CD4-positive, alpha-beta memory T cell (primary cell): ENCODE measurements at regions of chr1 and their contacts with region 1.

Region 1: GRCh38 chr1:32072622-32073298 is at the start of gene TMEM39B:
- DNase-seq: peak; percentile 94 to 97 (median 96)
- H3K4me3 ChIP-seq: peak within 1 kb of the TSS; percentile 95
- H3K4me3 Mint-ChIP-seq: peak within 1 kb of the TSS; percentile 84 to 98 (median 92)
- H3K27ac ChIP-seq: peak within 1 kb of the TSS; percentile 73
- H3K27ac Mint-ChIP-seq: peak within 1 kb of the TSS; percentile 80 to 99 (median 97)
- H3K4me1 ChIP-seq: peaks cover 35% of the 10 kb centered on the region
- H3K4me1 Mint-ChIP-seq: peaks cover 26 to 52% (median 41%) of the 10 kb centered on the region in 4 donors
- H3K27me3 ChIP-seq: no peaks in the 10 kb centered on the region
- H3K27me3 Mint-ChIP-seq: no peaks in the 10 kb centered on the region
- total RNA-seq, gene TMEM39B: 18.4 to 19.1 TPM

Region 2: DNA sequence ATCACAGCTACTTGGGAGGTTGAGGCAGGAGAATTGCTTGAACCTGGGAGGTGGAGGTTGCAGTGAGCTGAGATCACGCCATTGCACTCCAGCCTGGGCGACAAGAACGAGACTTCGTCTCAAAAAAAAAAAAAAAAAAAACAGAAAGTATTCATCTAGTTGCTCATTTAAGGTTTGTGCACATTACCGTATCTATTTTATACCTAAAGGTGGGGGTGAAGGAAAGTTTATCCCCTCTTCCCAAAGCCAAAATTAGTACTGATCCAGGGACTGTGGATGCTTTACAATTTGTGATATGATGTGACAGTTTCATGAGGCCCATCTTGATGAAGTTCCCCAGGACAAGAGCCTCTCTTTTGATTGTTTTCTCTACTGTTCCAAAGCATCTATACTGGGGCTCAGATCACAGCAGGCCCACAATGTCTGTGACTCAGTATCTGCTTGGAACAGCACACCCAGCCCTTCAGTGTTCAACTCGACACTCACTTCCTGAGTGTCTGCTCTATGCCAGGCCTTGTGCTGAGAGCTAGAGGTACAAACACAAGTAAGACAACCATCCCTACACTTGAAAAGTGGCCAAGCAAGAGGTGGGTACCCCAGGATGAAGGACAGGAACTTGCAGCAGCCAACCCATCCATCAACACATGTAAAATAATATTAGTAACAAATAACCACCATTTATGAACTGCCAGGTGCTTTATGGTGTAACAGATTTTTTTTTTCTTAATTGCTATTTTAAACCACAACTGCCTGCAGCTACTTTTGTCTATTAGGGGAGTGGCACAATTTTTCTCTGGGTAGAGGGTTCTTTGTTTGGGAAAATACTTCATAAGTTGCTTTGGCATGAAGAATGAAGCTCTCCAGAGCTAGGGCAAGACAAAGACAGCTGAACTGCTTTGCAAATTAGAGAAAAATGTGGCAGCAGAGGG is 88.1 kb before region 1 on chr1:
- CTCF ChIA-PET with region 1: interaction called, 6 read pairs
- POLR2A ChIA-PET with region 1: interaction called, 10 read pairs
- intact Hi-C with region 1: no loop called
- DNase-seq: peak in 2 of 5 donors; percentile 20 to 50
- H3K4me3 ChIP-seq: peak overlapping the region in 1 of 2 donors; percentile 21
- H3K4me3 Mint-ChIP-seq: peak overlapping the region in 6 of 8 donors; percentile 45 to 79 (median 57)
- H3K27ac ChIP-seq: peak overlapping the region; percentile 67
- H3K27ac Mint-ChIP-seq: peak overlapping the region; percentile 85 to 97 (median 94)
- H3K4me1 ChIP-seq: peaks cover 61% of the 10 kb centered on the region
- H3K4me1 Mint-ChIP-seq: peaks cover 41 to 71% (median 55%) of the 10 kb centered on the region in 4 donors
- H3K27me3 ChIP-seq: no peaks in the 10 kb centered on the region
- H3K27me3 Mint-ChIP-seq: no peaks in the 10 kb centered on the region

Region 3: GRCh38 chr1:32013386-32014198 is 59.2 kb before region 1 on chr1 and contains the start of gene KHDRBS1:
- CTCF ChIA-PET with region 1: no interaction called
- POLR2A ChIA-PET with region 1: interaction called, 48 read pairs
- intact Hi-C with region 1: loop called (anchors 1 kb)
- DNase-seq: peak; percentile 98 to 99 (median 99)
- H3K4me3 ChIP-seq: peak within 1 kb of the TSS; percentile 89 to 100
- H3K4me3 Mint-ChIP-seq: peak within 1 kb of the TSS; percentile 89 to 99 (median 98)
- H3K27ac ChIP-seq: peak within 1 kb of the TSS; percentile 95
- H3K27ac Mint-ChIP-seq: peak within 1 kb of the TSS; percentile 97 to 99 (median 98)
- H3K4me1 ChIP-seq: peaks cover 37% of the 10 kb centered on the region
- H3K4me1 Mint-ChIP-seq: peaks cover 20 to 38% (median 30%) of the 10 kb centered on the region in 4 donors
- H3K27me3 ChIP-seq: no peaks in the 10 kb centered on the region
- H3K27me3 Mint-ChIP-seq: no peaks in the 10 kb centered on the region
- total RNA-seq, gene KHDRBS1: 114 to 122 TPM

Region 4: DNA sequence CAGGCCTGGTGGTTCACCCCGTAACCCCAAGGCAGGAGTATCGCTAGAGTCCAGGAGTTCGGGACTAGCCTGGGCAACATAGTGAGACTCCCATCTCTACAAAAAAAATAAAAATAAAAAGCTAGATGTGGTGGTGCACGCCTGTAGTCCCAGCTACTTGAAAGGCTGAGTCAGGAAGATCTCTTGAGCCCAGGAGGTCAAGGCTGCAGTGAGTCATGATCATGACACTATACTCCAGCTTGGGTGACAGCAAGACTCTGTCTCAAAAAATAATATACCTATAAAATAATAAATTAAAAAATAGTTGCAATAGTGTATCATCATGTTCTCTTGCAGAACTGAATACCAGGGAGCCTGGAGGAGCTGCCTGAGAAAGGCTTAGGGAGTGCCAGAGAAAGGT is 19.9 kb before region 1 on chr1:
- CTCF ChIA-PET with region 1: interaction called, 6 read pairs
- POLR2A ChIA-PET with region 1: interaction called, 13 read pairs
- intact Hi-C with region 1: no loop called
- DNase-seq: no peak
- H3K4me3 ChIP-seq: no peak overlapping the region
- H3K4me3 Mint-ChIP-seq: no peak overlapping the region
- H3K27ac ChIP-seq: no peak overlapping the region
- H3K27ac Mint-ChIP-seq: peak overlapping the region in 1 of 7 donors; percentile 56
- H3K4me1 ChIP-seq: no peaks in the 10 kb centered on the region
- H3K4me1 Mint-ChIP-seq: no peaks in the 10 kb centered on the region
- H3K27me3 ChIP-seq: no peaks in the 10 kb centered on the region
- H3K27me3 Mint-ChIP-seq: no peaks in the 10 kb centered on the region

Region 5: DNA sequence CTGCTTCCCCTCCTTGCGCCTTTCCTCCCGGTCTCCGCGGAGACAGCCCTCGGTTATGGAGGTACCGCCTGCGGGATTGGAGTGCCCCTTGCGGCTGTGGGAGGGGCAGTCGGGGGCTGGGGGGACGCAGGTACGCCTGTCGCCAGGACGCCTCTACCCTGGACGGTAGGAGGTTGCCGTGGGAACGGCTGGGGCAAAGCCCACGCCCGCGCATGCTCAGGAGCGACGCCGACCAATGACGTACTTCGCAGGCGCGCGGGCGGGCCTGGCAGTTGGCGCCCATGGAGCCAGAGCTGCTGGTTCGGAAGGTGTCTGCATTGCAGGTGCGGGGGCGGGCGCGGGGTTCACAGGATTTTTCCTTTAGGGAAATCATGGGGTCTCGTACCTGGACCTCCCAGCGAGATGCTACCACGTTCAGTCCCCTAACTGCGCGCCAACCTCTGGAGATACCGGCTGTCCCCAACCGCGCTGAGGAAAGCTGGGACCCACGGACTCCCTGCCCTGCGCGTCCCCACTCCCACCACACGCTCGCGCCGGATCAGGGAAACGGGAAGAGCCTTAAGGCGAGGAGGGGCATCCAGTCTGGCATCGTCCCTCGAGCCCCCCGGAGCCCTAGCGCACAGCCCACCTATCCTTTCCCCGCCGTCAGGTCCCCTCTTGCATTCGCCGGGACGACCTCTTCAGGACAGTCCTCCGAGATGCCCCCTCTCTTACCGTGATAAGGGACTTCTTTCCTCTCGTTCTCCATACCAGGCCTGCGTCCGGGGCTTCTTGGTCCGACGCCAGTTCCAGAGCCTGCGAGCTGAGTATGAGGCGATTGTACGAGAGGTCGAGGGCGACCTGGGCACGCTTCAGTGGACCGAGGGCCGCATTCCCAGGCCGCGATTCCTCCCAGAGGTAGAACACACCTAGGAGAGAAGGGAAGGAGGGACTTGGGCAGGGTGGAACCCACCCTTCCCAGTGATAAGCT is 132.9 kb after region 1 on chr1 and contains the start of gene IQCC:
- CTCF ChIA-PET with region 1: no interaction called
- POLR2A ChIA-PET with region 1: interaction called, 8 read pairs
- intact Hi-C with region 1: loop called (anchors 10 kb)
- DNase-seq: peak; percentile 84 to 86 (median 86)
- H3K4me3 ChIP-seq: peak within 1 kb of the TSS; percentile 71 to 73
- H3K4me3 Mint-ChIP-seq: peak within 1 kb of the TSS; percentile 86 to 91 (median 89)
- H3K27ac ChIP-seq: peak within 1 kb of the TSS; percentile 63
- H3K27ac Mint-ChIP-seq: peak within 1 kb of the TSS; percentile 83 to 95 (median 92)
- H3K4me1 ChIP-seq: peaks cover 39% of the 10 kb centered on the region
- H3K4me1 Mint-ChIP-seq: peaks cover 15 to 48% (median 33%) of the 10 kb centered on the region in 4 donors
- H3K27me3 ChIP-seq: no peaks in the 10 kb centered on the region
- H3K27me3 Mint-ChIP-seq: no peaks in the 10 kb centered on the region
- total RNA-seq, gene IQCC: 2.7 TPM

Region 6: GRCh38 chr1:32394141-32394889 is 321.6 kb after region 1 on chr1 and contains the start of gene BSDC1:
- CTCF ChIA-PET with region 1: no interaction called
- POLR2A ChIA-PET with region 1: interaction called, 24 read pairs
- intact Hi-C with region 1: loop called (anchors 2 kb)
- DNase-seq: peak; percentile 98 to 99 (median 99)
- H3K4me3 ChIP-seq: peak within 1 kb of the TSS; percentile 87
- H3K4me3 Mint-ChIP-seq: peak within 1 kb of the TSS; percentile 99 to 100 (median 100)
- H3K27ac ChIP-seq: peak within 1 kb of the TSS; percentile 95
- H3K27ac Mint-ChIP-seq: peak within 1 kb of the TSS; percentile 92 to 100 (median 100)
- H3K4me1 ChIP-seq: peaks cover 43% of the 10 kb centered on the region
- H3K4me1 Mint-ChIP-seq: peaks cover 5 to 25% (median 19%) of the 10 kb centered on the region in 4 donors
- H3K27me3 ChIP-seq: no peaks in the 10 kb centered on the region
- H3K27me3 Mint-ChIP-seq: peaks cover 0 to 1% of the 10 kb centered on the region in 2 donors
- total RNA-seq, gene BSDC1: 106 to 112 TPM